Endothelial cell of umbilical vein (primary cell): ENCODE measurements at regions of chr5 and their contacts with region 1.

Region 1: DNA sequence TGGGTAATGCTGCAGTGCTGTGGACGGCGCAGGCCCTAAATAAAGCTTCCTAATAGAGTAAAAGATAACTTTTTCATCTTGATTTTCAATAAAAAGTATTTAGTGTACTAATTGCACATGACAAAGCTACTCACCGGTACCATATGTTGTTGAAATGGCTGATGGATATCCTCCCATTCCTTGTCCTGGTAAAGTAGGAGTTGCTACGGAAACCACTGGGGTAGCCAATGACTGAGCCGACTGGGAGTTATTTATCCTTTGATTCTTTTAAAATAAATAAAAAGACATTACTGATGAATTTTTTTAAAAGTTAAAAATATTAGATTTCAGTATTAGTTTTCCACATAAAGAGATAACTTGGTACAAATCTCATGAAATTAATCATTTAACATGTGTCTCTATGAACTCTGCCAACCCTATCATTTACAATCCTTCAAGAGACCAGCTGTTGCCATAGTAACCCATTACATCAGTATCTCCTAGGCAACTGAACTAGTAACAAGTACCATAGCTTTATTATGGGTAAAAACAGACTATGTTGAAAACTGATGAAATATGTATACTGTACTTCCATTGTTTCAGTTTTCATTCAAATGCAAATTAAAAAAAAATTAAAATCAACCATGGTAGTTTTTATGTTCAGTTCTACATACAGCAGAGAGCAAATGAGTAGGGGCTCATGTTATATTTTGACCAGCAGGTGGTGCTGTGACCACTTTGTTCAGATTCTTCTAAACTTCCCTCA is 153.7 kb downstream of the MEF2C start:
- DNase-seq: peak; percentile 86
- H3K4me3 ChIP-seq: no peak overlapping the region
- H3K27ac ChIP-seq: no peak overlapping the region
- H3K4me1 ChIP-seq: peaks cover 6% of the 10 kb centered on the region
- H3K27me3 ChIP-seq: no peaks in the 10 kb centered on the region
- CTCF ChIP-seq: peak; percentile 49 to 50
- POLR2A ChIP-seq: no peak

Region 2: DNA sequence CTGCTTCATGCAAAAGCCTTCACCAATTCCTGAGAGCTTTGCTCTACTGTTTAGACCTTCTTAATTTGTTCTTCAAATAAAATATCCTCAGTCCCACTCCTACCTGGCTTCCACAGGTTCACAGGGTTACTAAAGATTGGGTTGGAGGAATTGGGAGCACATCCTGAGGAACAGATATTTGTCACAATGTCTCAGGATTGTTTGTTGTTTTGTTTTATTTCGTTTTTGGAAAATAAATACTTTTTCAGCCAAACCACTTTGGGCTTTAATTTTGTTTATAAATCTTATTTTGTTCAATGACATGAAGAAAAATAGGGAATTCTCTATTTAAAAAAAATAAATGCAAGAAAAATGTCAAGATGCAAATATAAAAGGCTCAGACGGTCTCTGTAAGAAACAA is 95.2 kb before region 1 on chr5:
- CTCF ChIA-PET with region 1: no interaction called
- POLR2A ChIA-PET with region 1: no interaction called
- dilution Hi-C with region 1: no loop called
- intact Hi-C with region 1: no loop called
- DNase-seq: no peak
- H3K4me3 ChIP-seq: no peak overlapping the region
- H3K27ac ChIP-seq: no peak overlapping the region
- H3K4me1 ChIP-seq: no peaks in the 10 kb centered on the region
- H3K27me3 ChIP-seq: no peaks in the 10 kb centered on the region
- CTCF ChIP-seq: no peak
- POLR2A ChIP-seq: no peak

Region 3: DNA sequence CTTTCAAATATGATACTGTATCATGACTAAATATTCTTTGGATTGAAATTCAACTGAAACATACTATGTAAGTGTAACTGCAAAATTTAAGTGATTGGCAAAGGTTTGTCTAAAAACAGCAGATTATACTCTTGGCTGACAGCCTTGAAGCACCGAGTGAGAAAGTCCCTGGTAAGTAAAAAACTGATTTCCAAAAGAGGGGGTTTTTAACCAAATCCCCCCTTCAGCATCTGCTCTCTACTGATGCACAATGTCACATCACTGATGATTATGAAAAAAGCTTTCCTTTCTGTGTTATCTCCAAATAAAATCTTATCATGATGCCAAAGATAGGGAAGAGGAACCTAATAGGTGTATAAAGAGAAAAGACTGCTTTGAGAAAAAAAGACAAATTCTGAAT is 12.7 kb after region 1 on chr5:
- CTCF ChIA-PET with region 1: interaction called, 34 read pairs
- POLR2A ChIA-PET with region 1: no interaction called
- dilution Hi-C with region 1: no loop called
- intact Hi-C with region 1: no loop called
- DNase-seq: no peak
- H3K4me3 ChIP-seq: no peak overlapping the region
- H3K27ac ChIP-seq: no peak overlapping the region
- H3K4me1 ChIP-seq: peaks cover 10% of the 10 kb centered on the region
- H3K27me3 ChIP-seq: no peaks in the 10 kb centered on the region
- CTCF ChIP-seq: no peak
- POLR2A ChIP-seq: no peak

Region 4: GRCh38 chr5:88870285-88870684 is 141.0 kb after region 1 on chr5:
- CTCF ChIA-PET with region 1: interaction called, 28 read pairs
- POLR2A ChIA-PET with region 1: no interaction called
- dilution Hi-C with region 1: no loop called
- intact Hi-C with region 1: no loop called
- DNase-seq: no peak
- H3K4me3 ChIP-seq: no peak overlapping the region
- H3K27ac ChIP-seq: no peak overlapping the region
- H3K4me1 ChIP-seq: peaks cover 6% of the 10 kb centered on the region
- H3K27me3 ChIP-seq: no peaks in the 10 kb centered on the region
- CTCF ChIP-seq: no peak
- POLR2A ChIP-seq: no peak

Region 5: DNA sequence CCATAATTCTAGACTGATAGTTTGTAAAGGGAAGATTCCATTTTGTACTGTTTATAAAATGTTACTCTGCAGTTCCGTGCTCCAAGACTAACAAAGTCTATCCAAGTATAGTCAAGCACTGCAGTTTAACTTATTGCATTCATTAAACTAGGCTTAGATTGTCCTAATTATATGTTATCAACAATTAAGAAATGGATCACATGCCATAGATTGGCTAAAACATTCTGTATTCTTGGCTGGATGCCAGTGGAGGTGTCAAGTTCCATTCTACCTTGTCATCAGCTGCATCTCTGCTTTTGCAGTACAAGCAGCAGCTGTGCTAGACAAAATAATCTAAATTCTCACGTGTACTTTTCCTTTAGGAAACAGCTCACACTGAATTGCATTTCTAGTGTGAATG is 223.1 kb after region 1 on chr5:
- CTCF ChIA-PET with region 1: interaction called, 5 read pairs
- POLR2A ChIA-PET with region 1: no interaction called
- dilution Hi-C with region 1: no loop called
- intact Hi-C with region 1: loop called (anchors 5 kb)
- DNase-seq: peak; percentile 7
- H3K4me3 ChIP-seq: no peak overlapping the region
- H3K27ac ChIP-seq: no peak overlapping the region
- H3K4me1 ChIP-seq: no peaks in the 10 kb centered on the region
- H3K27me3 ChIP-seq: no peaks in the 10 kb centered on the region
- CTCF ChIP-seq: no peak
- POLR2A ChIP-seq: no peak

Region 6: GRCh38 chr5:89445106-89445745 is 716.0 kb after region 1 on chr5:
- CTCF ChIA-PET with region 1: interaction called, 3 read pairs
- POLR2A ChIA-PET with region 1: no interaction called
- dilution Hi-C with region 1: no loop called
- intact Hi-C with region 1: loop called (anchors 10 kb)
- DNase-seq: no peak
- H3K4me3 ChIP-seq: no peak overlapping the region
- H3K27ac ChIP-seq: no peak overlapping the region
- H3K4me1 ChIP-seq: no peaks in the 10 kb centered on the region
- H3K27me3 ChIP-seq: no peaks in the 10 kb centered on the region
- CTCF ChIP-seq: no peak
- POLR2A ChIP-seq: no peak

Region 7: DNA sequence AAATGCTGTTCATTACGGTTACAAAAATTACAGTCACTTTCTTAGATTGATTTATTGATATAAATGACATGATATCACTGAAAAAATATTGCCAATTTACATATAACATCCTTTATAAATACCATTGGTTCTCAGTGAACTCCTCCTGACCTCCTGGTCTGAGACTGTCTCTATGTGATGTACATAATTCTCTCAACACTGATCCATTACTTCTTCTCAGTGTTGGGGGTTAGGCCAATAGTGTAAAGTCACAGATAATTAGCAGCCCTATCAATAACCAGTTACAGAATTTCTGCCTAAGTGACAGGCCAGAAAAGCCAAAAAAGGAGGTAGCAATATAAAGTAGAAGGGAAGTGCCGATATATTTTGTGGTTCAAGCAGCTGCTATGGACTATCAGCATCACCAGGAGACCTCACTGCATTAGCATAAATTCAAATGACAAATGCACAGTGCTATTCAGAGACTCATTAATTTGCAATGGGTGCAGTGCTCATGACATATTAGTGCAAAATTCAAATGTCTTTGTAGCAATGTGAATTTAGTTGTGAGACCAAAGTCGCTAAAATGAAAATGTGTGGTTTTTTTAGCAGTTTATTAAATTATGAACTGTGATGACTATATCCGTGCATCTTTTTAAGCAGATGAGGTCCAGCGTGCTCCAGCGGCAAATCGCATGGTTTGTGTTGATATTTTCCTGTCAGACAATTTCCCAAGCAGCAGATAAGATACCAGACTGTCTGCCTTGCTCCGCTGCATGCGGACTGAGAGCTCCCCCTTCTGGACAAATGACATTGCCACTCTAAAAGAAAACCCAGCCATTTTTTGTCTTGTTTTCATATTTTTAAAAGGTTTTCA is 1535.7 kb after region 1 on chr5:
- CTCF ChIA-PET with region 1: interaction called, 175 read pairs
- POLR2A ChIA-PET with region 1: interaction called, 3 read pairs
- dilution Hi-C with region 1: no loop called
- intact Hi-C with region 1: loop called (anchors 1 kb)
- DNase-seq: peak; percentile 72
- H3K4me3 ChIP-seq: no peak overlapping the region
- H3K27ac ChIP-seq: no peak overlapping the region
- H3K4me1 ChIP-seq: no peaks in the 10 kb centered on the region
- H3K27me3 ChIP-seq: no peaks in the 10 kb centered on the region
- CTCF ChIP-seq: peak; percentile 84 to 90
- POLR2A ChIP-seq: no peak